ENCODE measurements at regions of chr2 and their contacts with region 1.

Region 1: DNA sequence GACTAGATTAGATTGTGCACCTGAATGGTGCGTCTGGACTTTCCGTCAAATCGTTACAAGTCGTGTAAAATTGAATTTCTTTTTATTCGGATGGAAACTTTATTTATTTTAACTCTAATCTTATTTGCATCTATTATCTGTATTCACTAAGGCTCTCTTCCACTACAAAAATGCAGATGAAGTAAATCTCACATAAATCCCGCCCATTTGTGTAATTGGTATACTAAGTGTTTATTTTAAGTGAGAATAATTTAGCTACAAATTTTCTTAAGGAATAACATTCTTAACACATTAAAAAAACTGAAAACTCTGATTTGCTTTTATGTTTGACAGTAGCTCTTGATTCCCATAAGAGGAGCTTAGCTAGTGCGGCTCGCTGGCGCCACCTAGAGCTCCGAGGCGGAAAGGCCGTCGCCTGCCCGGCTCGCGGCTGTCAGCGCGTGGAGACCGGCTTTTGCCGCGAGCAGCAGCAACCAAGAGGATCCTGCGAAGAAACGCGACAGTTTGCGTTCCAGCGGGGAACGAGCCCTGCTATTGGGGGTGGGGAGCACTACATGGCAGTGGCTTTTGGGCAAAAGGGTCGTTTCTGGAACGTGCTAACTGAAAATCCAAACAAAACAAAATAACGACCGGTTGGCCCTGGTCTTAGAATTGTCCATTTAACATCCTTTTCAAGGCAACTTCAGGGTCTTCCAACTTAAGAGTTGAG is 6.7 kb downstream of the SP9 start:
- DNase-seq: peak; percentile 93
- H3K4me3 Mint-ChIP-seq: peak overlapping the region; percentile 62
- H3K27ac Mint-ChIP-seq: peak overlapping the region; percentile 51
- H3K4me1 Mint-ChIP-seq: peaks cover 37% of the 10 kb centered on the region
- H3K27me3 Mint-ChIP-seq: peaks cover 62% of the 10 kb centered on the region

Region 2: DNA sequence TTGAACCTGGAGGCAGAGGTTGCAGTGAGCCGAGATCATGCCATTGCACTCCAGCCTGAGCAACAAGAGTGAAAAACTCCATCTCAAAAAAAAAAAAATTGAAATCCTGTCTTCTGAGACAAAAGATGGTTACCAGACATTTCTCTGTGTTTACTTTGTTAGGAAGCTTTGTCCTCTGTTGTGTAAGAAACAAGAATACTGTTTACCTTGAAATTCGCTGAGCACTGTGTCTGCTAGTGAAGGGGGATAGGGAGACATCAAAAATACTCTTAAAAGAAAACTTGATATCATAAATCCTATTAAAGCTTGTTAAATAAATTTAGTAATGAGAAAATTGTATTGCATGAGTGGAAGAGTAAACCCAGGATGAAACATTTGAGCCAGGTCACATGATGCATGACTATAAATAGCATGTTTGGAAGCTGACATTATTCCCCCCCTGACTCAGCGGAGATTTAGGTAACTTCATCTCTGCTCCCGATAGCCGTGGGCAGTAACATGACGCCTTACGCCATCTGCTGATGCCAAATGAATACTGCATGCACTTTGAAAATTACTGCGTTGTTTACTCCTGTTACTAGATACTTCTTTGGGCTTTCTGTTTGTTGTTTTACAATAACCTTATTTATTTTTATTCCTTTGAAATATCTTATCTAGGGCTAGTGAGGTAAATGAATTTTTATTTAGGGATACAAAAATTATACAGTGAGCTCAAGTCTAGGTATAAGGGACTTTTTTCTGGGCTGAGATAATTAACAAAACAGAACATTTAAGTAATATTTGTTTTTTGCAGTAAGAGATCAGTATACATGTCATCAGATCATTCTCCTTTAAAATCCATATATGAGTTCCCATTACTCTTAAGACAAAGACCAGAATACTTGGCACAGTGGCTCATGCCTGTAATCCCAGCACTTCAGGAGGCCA is 1130.9 kb before region 1 on chr2:
- CTCF ChIA-PET with region 1: no interaction called
- intact Hi-C with region 1: loop called (anchors 10 kb)
- DNase-seq: peak; percentile 72
- H3K4me3 Mint-ChIP-seq: no peak overlapping the region
- H3K27ac Mint-ChIP-seq: no peak overlapping the region
- H3K4me1 Mint-ChIP-seq: no peaks in the 10 kb centered on the region
- H3K27me3 Mint-ChIP-seq: peaks cover 8% of the 10 kb centered on the region

Region 3: DNA sequence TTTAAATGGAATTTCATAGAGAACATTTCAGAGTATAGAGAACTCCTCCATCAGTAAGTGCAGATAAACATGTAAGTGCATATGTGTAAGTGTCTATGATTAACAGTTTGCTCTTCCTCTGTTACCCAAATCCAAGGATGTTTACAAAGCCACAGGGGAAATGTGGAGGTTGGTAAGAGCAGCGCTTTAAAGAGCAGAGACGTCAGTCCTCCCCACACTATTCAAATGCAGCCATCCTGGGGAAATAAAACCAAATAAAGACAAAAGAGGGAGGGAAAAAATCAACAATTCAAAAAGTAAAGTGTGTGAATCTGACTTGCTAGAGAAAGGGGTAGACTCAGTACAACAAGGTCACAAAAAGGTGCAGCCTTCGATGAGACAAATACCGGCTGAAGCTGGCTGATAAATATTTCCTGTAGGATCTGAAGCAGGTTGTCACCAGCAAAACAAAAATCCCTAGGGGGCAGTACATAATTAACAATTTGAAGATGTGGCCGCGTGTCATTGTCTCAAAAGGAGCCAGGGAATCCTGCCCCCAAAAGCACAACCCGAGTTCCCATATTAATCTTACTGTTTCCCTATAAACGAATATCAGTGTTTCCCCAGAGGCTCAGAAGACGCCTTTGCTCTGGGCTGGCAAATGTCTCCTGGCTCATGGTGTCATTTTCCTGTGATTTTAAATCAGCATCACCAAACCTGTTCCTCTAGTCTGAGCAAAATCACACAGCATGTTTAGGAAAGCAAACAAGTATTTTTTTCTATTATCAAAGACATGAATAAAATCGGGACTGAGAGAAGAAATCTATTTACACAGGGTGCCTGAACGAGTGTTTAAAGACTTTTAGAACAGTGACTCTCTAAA is 770.2 kb before region 1 on chr2:
- CTCF ChIA-PET with region 1: no interaction called
- intact Hi-C with region 1: loop called (anchors 1 kb)
- DNase-seq: peak; percentile 8
- H3K4me3 Mint-ChIP-seq: no peak overlapping the region
- H3K27ac Mint-ChIP-seq: no peak overlapping the region
- H3K4me1 Mint-ChIP-seq: peaks cover 4% of the 10 kb centered on the region
- H3K27me3 Mint-ChIP-seq: peaks cover 6% of the 10 kb centered on the region

Region 4: GRCh38 chr2:173965329-173966025 is 376.0 kb before region 1 on chr2 and contains the start of gene SP3:
- CTCF ChIA-PET with region 1: no interaction called
- intact Hi-C with region 1: loop called (anchors 2 kb)
- DNase-seq: peak; percentile 97
- H3K4me3 Mint-ChIP-seq: peak within 1 kb of the TSS; percentile 86
- H3K27ac Mint-ChIP-seq: peak within 1 kb of the TSS; percentile 99
- H3K4me1 Mint-ChIP-seq: peaks cover 21% of the 10 kb centered on the region
- H3K27me3 Mint-ChIP-seq: no peaks in the 10 kb centered on the region
- total RNA-seq, gene SP3: 89.8 to 99.7 TPM

Region 5: DNA sequence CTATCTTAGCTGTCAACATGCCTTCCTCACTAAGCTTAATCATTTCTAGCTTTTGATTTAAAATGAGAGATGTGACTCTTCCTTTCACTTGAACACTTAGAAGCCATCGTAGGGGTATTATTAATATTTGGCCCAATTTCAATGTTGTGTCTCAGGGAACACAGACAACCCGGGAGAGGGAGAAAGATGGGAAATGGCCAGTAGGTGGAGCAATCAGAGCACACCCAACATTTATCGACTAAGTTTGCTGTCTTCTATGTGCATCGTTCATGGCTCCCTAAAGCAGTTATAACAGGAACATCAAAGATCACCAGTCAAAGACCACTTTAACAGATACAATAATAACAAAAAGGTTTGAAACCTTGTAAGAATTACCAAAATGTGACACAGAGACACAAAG is 203.3 kb before region 1 on chr2:
- CTCF ChIA-PET with region 1: interaction called, 6 read pairs
- intact Hi-C with region 1: loop called (anchors 1 kb)
- DNase-seq: no peak
- H3K4me3 Mint-ChIP-seq: no peak overlapping the region
- H3K27ac Mint-ChIP-seq: no peak overlapping the region
- H3K4me1 Mint-ChIP-seq: no peaks in the 10 kb centered on the region
- H3K27me3 Mint-ChIP-seq: no peaks in the 10 kb centered on the region

Region 6: DNA sequence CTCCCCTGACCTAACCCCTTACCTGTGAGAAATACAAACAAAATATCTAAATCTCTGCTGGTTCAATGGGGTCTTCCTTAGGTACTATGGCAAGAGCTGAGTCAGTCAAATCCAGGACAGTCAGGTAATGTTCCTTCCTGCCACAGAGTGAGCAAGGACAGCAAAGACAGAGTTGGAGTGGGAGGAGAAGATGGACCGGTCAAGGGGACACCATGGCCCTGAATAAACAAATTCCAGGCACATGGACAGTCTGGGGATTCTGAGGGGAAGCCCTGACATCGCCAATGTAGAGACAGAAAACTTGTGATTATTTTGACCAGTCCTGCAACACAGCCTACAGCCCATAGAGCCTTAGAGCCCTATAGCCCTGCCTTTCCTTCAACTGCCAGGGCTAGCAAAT is 135.9 kb before region 1 on chr2:
- CTCF ChIA-PET with region 1: no interaction called
- intact Hi-C with region 1: no loop called
- DNase-seq: no peak
- H3K4me3 Mint-ChIP-seq: no peak overlapping the region
- H3K27ac Mint-ChIP-seq: no peak overlapping the region
- H3K4me1 Mint-ChIP-seq: no peaks in the 10 kb centered on the region
- H3K27me3 Mint-ChIP-seq: no peaks in the 10 kb centered on the region

Region 7: DNA sequence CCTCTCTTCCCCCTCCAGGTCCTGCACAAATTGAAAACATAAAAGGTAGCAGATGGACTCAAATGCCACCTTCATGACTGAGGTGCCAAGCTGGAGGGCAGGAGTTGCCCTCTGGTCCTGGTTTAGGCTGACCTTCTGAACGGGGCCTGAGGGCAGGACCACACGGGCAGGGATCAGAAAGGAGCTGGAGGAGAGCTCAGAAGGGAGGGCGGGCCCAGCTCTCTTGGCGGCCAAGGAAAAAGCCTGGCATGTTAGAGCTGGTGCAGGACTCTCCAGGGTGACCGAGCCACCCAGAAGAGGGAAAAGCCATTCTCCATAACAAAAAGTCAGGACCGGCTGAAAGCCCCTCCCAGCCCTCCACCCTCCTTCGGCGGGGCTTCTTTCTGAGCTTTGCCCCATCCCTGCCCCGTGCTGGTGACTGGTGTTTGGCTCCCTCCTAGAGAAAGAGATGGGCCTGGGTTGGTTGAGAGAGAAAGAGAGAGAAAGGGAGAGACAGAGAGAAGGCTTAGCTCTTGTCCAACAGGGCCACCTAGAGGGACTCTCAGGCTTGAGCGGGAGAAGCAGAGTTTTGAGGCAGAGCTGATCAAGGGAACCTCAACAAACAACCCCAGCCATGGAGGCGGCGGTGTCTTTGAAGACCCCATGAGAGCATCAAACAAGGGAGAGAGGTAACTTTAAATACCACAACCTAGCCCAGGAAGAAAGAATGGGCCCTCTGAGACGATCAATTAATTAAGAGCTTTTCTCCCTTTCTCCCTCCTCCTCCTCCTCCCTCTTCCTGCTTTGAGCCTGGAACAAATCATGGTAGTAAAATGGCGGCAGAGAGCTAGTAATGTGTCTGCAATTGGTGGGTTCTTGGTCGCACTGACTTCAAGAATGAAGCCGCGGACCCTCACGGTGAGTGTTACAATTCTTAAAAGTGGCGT is 205.4 kb after region 1 on chr2:
- CTCF ChIA-PET with region 1: interaction called, 3 read pairs
- intact Hi-C with region 1: loop called (anchors 5 kb)
- DNase-seq: peak; percentile 74
- H3K4me3 Mint-ChIP-seq: no peak overlapping the region
- H3K27ac Mint-ChIP-seq: peak overlapping the region; percentile 3
- H3K4me1 Mint-ChIP-seq: peaks cover 9% of the 10 kb centered on the region
- H3K27me3 Mint-ChIP-seq: no peaks in the 10 kb centered on the region

Measured in activated naive CD4-positive, alpha-beta T cell treated with anti-CD3 and anti-CD28 coated beads for 36 hours (primary cell).